HEK293 (cell line): ENCODE measurements at regions of chr17 and their contacts with region 1.

Region 1: DNA sequence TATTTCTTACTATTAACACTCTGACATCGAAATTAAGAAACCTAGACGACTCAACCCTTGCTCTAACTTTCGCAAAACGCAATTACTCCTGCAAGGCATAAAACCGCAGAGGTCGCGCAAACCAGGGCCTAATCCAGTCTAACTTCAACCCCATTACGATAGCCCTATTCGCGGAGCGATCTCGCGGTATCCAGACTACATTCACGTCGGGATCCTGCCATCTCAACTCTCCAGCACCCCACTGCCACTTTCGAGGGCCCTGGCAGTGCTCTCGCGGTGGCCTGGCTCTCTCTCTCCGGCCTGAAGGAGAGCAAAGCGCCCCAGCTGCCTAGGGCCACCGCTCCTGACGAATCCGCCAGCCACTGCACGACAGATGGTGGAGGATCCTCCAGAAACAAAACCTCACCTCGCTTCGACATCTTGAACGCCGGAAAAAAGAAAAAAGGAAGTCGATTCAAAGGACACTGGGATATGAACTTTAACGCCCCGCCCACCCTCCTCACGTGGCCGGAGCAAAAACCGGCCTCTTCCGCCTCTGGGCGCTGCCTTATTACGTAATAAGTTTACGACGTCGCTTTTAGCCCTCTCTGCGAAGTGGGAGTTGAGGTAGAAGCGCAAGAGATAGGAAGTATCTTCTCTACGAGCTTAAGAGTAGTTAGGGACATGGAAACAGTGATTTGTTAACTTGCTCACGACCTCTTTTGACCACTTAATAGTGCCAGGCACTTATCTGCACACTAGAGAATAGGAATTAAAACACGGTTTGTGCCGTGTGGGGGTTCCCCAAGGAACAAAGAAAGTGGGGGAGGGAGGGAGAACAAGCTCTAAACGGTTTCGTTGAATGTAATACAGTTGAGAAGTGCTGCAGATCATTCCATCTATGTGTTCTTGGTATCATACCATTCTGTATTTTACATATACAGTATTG is at the start of gene RPL23:
- H3K4me3 ChIP-seq: peak within 1 kb of the TSS; percentile 86
- H3K27ac ChIP-seq: peak within 1 kb of the TSS; percentile 99
- H3K4me1 ChIP-seq: peaks cover 3% of the 10 kb centered on the region
- CTCF ChIP-seq: no peak

Region 2: GRCh38 chr17:38752119-38752929 is 101.2 kb before region 1 on chr17 and contains the start of gene PSMB3:
- CTCF ChIA-PET with region 1: no interaction called
- POLR2A ChIA-PET with region 1: interaction called, 13 read pairs
- H3K4me3 ChIP-seq: peak within 1 kb of the TSS; percentile 78
- H3K27ac ChIP-seq: peak within 1 kb of the TSS; percentile 66
- H3K4me1 ChIP-seq: peaks cover 11% of the 10 kb centered on the region
- CTCF ChIP-seq: no peak; the same call in 1 of the 2 replicates

Region 3: DNA sequence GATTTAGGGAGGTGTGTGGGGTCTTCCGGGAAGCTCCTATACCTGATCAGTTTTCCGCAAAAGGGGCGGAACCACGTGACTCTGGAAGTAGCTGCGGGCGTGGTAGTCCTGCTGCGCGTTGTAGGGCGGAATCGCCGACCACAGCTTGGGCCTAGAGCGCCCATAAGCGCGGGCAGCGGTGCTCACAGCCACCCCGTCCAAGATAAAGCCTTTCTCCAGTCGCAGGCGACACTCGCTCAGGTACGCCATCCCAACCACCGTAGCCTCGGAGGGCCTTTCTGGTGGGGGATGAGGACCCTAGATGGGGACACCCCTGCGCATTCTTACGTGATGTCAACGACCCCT is 12.4 kb before region 1 on chr17:
- CTCF ChIA-PET with region 1: no interaction called
- POLR2A ChIA-PET with region 1: interaction called, 26 read pairs
- H3K4me3 ChIP-seq: no peak overlapping the region
- H3K27ac ChIP-seq: no peak overlapping the region
- H3K4me1 ChIP-seq: no peaks in the 10 kb centered on the region
- CTCF ChIP-seq: no peak